BJ (cell line): ENCODE measurements at regions of chr1 and their contacts with region 1.

Region 1: GRCh38 chr1:218345673-218346390 is 696 bp downstream of the TGFB2 start:
- DNase-seq: no peak
- H3K4me3 ChIP-seq: peak overlapping the region; percentile 46
- H3K27me3 ChIP-seq: no peaks in the 10 kb centered on the region
- CTCF ChIP-seq: no peak

Region 2: DNA sequence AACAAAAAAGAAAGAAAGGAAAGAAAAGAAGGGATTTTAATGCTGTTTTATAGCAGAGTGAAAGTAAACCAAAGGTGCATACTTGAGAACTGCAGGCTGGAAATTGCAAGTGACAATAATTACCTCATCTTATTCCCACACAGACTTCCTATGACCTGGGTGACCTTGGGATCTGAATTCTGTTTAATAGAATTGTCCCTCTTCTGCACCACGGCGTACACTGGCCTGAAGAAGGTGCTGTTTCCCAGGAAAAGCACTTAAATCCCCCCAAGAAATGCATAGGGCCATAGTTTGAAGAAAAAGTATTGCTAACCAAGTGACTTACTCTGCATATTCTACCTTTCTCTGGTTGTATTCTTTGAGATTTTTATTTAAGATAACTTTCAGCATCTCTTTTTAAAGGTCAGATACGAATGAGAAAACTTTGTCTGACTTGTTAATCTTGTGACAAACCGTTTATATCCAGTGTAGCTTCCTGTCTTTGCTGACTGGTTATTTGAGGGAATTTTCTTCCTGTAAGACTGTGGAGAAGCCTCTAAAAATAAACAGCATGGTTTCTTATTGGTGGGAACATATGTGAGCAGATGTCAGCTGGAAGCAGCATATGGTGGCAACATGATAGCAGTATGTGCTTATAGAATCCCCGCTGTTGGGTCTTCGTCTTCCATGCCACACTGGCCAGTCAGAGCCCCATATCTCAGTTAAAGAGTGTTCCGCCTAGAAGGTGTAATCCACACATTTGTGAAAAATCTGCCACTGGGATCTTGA is 15.7 kb after region 1 on chr1:
- CTCF ChIA-PET with region 1: interaction called, 14 read pairs
- POLR2A ChIA-PET with region 1: no interaction called
- DNase-seq: no peak
- H3K4me3 ChIP-seq: no peak overlapping the region
- H3K27me3 ChIP-seq: no peaks in the 10 kb centered on the region
- CTCF ChIP-seq: peak; percentile 69

Region 3: DNA sequence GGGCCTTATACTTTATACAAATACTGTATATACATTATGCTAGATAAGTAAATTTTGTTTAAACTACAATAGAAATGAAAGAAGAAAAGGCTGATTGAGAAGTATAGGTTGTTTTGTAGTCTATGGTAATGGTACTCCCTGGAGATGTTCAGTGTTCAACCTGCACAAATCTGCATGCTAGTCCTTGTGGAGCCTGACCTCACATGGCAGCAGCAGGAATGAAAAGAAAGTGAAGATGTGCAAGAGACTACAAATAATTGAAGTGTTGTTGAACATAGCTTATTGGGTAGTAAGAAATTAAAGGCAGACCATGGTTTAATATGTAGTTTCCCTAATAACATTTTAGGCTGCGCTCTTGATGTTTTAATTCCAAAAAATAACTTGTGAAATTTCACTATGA is 200.5 kb after region 1 on chr1:
- CTCF ChIA-PET with region 1: interaction called, 15 read pairs
- POLR2A ChIA-PET with region 1: no interaction called
- DNase-seq: no peak
- H3K4me3 ChIP-seq: no peak overlapping the region
- H3K27me3 ChIP-seq: no peaks in the 10 kb centered on the region
- CTCF ChIP-seq: peak; percentile 30